Activated T-helper 2 cell treated with anti-CD3 and anti-CD28 coated beads, Interferon-gamma antibody, Interleukin-2, Interleukin-4, amounts not matched to agents 10 μg/mL and 5 μg/mL and 100 μg/mL, durations not matched to agents 14 hours and 24 hours and 36 hours (primary cell): ENCODE measurements at regions of chr12 and their contacts with region 1.

Region 1: GRCh38 chr12:49088190-49088931 is 6.2 kb downstream of the DHH start:
- DNase-seq: peak; percentile 62
- H3K4me3 Mint-ChIP-seq: peak overlapping the region; percentile 8
- H3K27ac Mint-ChIP-seq: no peak overlapping the region
- H3K4me1 Mint-ChIP-seq: peaks cover 38% of the 10 kb centered on the region
- H3K27me3 Mint-ChIP-seq: peaks cover 44% of the 10 kb centered on the region

Region 2: DNA sequence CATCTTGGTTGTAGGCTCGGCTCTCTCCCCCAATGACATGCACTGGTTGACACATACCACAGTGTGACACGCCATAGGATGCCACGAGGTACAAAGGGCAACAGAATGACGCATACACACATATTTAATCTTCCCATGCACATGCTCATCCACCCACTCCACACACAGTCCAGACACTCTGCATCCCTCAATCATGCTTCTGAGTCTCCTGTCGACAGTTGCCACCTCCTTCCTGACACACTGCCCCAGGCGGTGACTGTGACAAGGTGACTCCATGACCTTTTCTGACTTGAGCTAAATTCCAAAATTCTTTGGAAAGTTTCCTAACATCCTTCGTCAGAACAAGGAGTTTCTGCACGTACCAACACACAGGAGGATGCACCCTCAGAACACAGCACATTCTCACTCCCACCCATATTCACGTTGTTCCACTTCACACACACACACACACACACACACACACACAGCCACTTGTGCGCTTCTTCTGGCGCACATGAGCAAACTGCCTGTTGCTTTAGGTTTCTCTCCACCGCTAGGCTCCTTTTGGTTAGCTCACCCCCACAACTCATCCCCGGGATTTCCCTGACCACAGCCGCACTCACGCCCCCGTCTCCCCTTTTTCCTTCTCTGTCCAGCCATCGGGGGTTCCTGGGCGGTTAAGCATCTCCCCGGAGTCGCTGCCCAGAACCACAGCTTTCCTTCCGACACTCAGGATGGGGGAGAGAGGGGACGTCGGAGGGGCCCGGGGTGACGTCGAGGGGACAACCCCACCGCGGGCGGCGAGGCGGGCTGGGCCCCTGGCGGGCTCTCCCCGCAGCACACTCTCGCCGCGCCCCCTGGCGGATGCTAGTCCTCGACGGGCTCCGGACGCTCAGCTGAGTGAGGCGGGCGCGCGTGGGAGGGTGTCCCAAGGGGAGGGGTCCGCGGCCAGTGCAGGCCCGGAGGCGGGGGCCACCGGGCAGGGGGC is 110.8 kb before region 1 on chr12:
- intact Hi-C with region 1: loop called (anchors 2 kb)
- DNase-seq: peak; percentile 61
- H3K4me3 Mint-ChIP-seq: peak overlapping the region; percentile 2
- H3K27ac Mint-ChIP-seq: peak overlapping the region; percentile 62
- H3K4me1 Mint-ChIP-seq: peaks cover 47% of the 10 kb centered on the region
- H3K27me3 Mint-ChIP-seq: peaks cover 82% of the 10 kb centered on the region

Region 3: DNA sequence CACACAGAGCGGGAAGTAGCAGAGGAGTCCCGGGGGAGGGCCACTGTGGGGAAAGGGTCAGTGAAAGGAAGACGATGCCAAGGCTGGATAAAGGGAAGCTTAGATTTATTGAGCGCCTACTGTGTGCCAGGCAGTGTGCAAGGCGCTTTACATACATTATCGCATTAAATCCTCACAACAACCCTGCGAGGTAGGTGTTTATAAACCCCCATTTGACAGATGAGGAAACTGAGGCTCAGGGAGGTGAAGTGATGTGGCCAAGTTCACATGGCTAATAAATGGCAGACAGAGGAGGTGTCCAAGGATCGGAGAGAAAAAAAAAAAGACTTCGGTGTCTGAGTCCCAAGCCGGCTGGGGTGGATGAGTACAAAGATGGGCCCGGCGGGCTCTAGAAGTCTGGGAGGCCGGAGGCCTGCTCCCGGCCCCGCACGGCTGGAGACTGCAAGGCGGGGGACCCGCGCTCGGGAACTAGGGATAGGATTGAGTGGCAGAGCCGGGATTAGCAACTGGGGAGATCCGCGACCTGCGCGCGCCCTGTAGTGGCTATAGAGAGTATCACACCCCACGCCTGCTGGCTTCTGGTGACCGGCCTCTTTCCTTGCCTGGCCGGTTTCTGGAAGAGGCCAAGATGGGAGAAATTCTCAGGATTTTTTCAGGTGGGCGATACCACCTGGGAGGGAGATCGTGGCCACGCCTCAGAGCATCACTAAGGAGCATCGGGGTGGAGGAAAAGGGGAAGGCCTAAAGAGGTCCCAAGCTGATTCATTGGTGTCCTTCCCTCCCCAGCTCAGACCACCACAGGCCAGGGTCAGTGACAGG is 93.1 kb before region 1 on chr12:
- intact Hi-C with region 1: loop called (anchors 5 kb)
- DNase-seq: no peak
- H3K4me3 Mint-ChIP-seq: no peak overlapping the region
- H3K27ac Mint-ChIP-seq: no peak overlapping the region
- H3K4me1 Mint-ChIP-seq: peaks cover 26% of the 10 kb centered on the region
- H3K27me3 Mint-ChIP-seq: peaks cover 55% of the 10 kb centered on the region

Region 4: GRCh38 chr12:49014547-49014946 is 73.8 kb before region 1 on chr12:
- intact Hi-C with region 1: no loop called
- DNase-seq: no peak
- H3K4me3 Mint-ChIP-seq: no peak overlapping the region
- H3K27ac Mint-ChIP-seq: no peak overlapping the region
- H3K4me1 Mint-ChIP-seq: peaks cover 20% of the 10 kb centered on the region
- H3K27me3 Mint-ChIP-seq: no peaks in the 10 kb centered on the region

Region 5: DNA sequence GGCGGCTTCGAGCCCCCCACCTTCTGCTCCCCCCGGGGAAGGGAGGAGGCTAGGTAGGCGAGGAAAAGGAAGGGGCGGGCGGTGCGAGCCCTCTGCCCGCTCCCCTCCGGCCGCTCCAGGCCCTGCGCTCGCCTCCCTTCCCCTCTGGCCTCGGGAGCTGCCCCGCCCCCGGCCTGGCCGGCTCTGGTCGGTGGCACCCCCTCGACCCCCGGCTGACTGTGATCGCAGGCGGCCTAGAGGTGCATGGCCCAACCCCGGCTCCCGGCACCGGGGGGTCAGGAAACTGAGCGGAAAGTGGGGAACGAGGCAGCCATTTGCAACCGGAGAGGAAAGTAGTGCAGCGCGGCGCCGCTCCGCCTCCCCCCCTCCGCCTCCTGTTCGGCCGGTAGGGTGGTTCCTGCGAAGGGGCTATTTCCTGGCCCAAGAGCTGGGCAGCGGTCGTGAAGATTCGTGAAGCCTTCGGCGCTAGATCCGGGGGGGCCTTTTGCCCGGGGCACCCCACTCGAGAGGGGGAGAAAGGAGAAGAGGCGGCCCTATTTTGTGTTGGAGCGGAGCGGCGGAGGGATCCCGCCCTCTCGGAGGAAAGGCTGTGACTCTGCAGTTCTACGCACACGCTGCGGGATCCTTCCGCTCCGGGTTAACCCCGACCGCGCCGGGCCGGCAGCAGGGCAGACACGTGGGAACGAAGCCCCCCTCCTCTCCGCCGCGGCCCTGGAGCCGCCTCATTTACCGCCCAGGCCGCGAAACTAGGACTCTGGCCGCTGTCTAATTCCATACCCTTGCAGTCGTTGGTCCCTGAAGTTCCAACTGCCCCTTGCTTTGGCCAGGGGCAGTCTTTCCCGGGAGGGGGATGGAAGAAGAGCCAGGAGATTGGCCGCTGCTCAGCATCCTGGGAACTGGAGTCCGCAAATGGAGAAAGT is 27.9 kb before region 1 on chr12 and contains the start of gene KMT2D:
- intact Hi-C with region 1: loop called (anchors 2 kb)
- DNase-seq: peak; percentile 89
- H3K4me3 Mint-ChIP-seq: peak within 1 kb of the TSS; percentile 92
- H3K27ac Mint-ChIP-seq: peak within 1 kb of the TSS; percentile 89
- H3K4me1 Mint-ChIP-seq: peaks cover 43% of the 10 kb centered on the region
- H3K27me3 Mint-ChIP-seq: no peaks in the 10 kb centered on the region
- total RNA-seq, gene KMT2D: 93.3 and 100 TPM in 2 replicates

Region 6: GRCh38 chr12:49110464-49111155 is 22.2 kb after region 1 on chr12 and contains the start of gene LMBR1L:
- intact Hi-C with region 1: loop called (anchors 1 kb)
- DNase-seq: peak; percentile 94
- H3K4me3 Mint-ChIP-seq: peak within 1 kb of the TSS; percentile 97
- H3K27ac Mint-ChIP-seq: peak within 1 kb of the TSS; percentile 91
- H3K4me1 Mint-ChIP-seq: peaks cover 22% of the 10 kb centered on the region
- H3K27me3 Mint-ChIP-seq: peaks cover 2% of the 10 kb centered on the region
- total RNA-seq, gene LMBR1L: 47.1 and 53.5 TPM in 2 replicates

Region 7: DNA sequence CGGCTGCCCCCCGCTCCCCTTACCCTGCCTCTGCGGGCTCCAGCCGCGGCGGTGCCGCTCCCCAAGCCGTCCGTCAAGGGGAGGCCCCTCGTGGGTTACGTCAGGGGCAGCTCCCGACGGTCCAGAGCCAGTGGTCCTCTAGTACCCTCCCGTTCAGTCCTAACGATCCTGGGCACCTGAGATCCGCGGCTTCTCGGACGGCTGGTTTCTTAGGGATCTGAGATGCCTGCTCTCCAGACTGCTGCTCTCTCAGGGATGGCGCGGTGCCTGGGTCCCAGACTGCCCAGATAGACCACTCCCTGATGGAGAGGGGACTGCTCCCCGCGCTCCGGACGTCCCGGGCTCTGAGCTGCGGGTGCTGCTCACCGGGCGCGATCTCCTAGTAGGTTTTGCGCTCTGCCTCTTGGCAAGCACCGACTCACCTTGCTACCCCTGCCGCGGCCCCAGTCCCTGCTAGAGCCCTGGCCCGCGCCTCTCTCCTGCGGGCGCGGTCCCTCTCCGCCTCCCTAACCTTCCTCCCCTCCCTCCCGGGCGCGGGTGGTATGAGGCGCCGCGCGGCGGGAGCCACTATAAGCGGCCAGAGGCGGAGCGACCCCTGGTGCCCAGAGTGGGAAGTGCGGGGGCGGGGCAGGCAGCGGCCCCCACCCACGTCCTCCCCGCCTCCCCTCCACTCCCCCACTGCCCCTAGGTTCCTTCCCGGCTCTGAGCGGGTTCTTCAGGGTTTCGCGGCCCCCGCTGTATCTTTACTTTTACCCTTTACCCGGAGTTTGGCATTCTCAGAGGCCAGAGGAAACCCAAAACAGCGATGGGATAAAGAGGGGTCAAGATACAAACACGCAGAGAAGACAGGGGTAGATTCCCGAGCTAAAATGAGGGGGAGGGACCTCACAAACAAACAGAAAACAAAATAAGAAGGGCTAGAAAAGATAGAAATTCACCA is 248.6 kb after region 1 on chr12 and contains the start of gene C1QL4:
- intact Hi-C with region 1: loop called (anchors 2 kb)
- DNase-seq: peak; percentile 82
- H3K4me3 Mint-ChIP-seq: peak within 1 kb of the TSS; percentile 59
- H3K27ac Mint-ChIP-seq: no peak within 1 kb of the TSS
- H3K4me1 Mint-ChIP-seq: peaks cover 17% of the 10 kb centered on the region
- H3K27me3 Mint-ChIP-seq: peaks cover 78% of the 10 kb centered on the region
- total RNA-seq, gene C1QL4: not detected in 2 replicates

Region 8: DNA sequence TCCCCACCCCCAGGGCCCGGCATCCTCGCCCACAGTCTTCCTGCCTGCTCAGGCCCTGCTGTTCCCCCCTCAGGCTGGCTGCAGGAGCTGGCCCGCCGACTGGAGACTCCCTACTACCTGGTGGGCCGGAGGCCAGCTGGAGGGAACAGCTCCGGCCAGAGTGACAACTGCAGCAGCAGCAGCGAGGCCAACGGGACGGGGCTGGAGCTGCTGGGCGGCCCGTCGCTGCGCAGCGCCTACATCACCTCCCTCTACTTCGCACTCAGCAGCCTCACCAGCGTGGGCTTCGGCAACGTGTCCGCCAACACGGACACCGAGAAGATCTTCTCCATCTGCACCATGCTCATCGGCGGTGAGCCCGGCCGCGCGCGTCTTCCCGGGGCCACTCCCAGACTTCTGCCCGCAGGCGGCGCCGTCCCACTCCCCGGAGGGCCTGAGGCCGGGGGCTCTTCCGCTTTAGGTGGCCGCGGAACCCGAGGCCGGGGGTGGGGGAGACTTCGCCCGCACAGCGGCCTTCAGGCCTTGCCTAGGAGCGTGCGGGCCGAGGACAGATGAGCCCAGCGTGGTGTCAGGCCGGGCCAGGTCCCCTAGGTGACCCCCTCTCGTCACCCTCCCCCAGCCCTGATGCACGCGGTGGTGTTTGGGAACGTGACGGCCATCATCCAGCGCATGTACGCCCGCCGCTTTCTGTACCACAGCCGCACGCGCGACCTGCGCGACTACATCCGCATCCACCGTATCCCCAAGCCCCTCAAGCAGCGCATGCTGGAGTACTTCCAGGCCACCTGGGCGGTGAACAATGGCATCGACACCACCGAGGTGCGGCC is 460.7 kb after region 1 on chr12:
- intact Hi-C with region 1: loop called (anchors 10 kb)
- DNase-seq: no peak
- H3K4me3 Mint-ChIP-seq: peak overlapping the region; percentile 67
- H3K27ac Mint-ChIP-seq: no peak overlapping the region
- H3K4me1 Mint-ChIP-seq: peaks cover 9% of the 10 kb centered on the region
- H3K27me3 Mint-ChIP-seq: peaks cover 27% of the 10 kb centered on the region